IMR-90 (cell line): ENCODE measurements at regions of chr6 and their contacts with region 1.

Region 1: GRCh38 chr6:16265351-16266341 is 27.3 kb downstream of the GMPR start:
- DNase-seq: no peak
- ATAC-seq: no peak
- H3K4me3 ChIP-seq: no peak overlapping the region
- H3K27ac ChIP-seq: no peak overlapping the region
- H3K4me1 ChIP-seq: no peaks in the 10 kb centered on the region
- H3K27me3 ChIP-seq: no peaks in the 10 kb centered on the region; the same call in 1 of the 2 replicates
- CTCF ChIP-seq: no peak
- POLR2A ChIP-seq: no peak
- RAD21 ChIP-seq: no peak

Region 2: GRCh38 chr6:16286148-16286522 is 20.5 kb after region 1 on chr6:
- CTCF ChIA-PET with region 1: interaction called, 4 read pairs
- POLR2A ChIA-PET with region 1: interaction called, 10 read pairs
- dilution Hi-C with region 1: no loop called
- in situ Hi-C with region 1: no loop called
- intact Hi-C with region 1: no loop called
- DNase-seq: peak; percentile 38
- ATAC-seq: peak; percentile 86
- H3K4me3 ChIP-seq: no peak overlapping the region
- H3K27ac ChIP-seq: no peak overlapping the region
- H3K4me1 ChIP-seq: no peaks in the 10 kb centered on the region
- H3K27me3 ChIP-seq: no peaks in the 10 kb centered on the region
- CTCF ChIP-seq: peak; percentile 80
- POLR2A ChIP-seq: no peak
- RAD21 ChIP-seq: peak; percentile 81